Activated T-helper 2 cell treated with anti-CD3 and anti-CD28 coated beads, Interferon-gamma antibody, Interleukin-2, Interleukin-4, amounts not matched to agents 10 μg/mL and 5 μg/mL and 100 μg/mL, durations not matched to agents 14 hours and 24 hours and 36 hours (primary cell): ENCODE measurements at regions of chr6 and their contacts with region 1.

Region 1: DNA sequence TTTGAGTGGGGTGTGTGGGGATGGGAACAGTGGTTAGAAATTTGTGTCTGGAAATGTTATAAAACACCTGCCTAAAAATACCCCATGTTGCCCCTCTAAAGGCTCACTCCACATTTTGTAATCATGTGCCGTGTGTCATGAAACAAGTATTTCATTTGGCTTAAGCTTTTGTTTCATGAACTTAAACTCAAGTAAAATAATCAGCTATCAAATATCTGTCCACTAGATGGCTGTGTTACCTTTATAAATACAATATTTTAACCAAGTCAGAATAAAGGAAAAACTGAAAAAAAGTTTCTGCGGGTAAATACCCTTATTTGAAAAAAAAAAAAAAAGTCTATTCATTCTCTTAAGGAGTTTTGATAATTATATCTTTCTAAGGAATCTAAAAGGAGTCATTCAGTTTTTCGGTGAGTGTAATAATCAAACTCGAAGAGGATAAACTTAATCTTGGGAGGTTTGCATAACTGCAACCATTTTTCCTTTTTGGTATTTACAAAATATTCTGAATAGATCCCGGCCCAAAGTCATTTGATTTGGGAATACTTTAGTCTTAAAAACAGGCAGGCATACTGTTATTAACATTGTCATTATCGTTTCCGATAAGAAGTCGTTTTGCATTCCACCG is 29.9 kb upstream of the MTRF1L start:
- DNase-seq: no peak
- H3K4me3 Mint-ChIP-seq: no peak overlapping the region
- H3K27ac Mint-ChIP-seq: no peak overlapping the region
- H3K4me1 Mint-ChIP-seq: no peaks in the 10 kb centered on the region
- H3K27me3 Mint-ChIP-seq: peaks cover 23% of the 10 kb centered on the region

Region 2: DNA sequence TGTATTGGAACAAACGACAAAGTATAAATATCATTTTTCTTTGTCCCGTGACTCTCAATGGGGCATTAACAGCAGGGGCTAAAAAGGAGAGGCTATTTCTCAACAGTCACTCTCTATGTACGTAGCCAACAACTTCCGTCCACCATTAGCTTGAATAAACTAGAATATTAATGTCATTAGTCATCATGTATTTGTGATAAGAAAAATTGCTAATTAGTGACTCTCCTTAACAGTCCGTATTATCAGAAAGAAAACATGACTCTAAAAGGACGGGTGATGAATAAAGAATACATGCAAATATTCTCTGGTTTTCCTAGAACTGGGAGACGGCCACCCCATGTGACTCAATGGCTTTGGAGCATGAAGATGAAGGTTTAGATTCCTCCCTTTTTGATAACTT is 263.2 kb before region 1 on chr6:
- intact Hi-C with region 1: loop called (anchors 10 kb)
- DNase-seq: no peak
- H3K4me3 Mint-ChIP-seq: no peak overlapping the region
- H3K27ac Mint-ChIP-seq: no peak overlapping the region
- H3K4me1 Mint-ChIP-seq: no peaks in the 10 kb centered on the region
- H3K27me3 Mint-ChIP-seq: no peaks in the 10 kb centered on the region

Region 3: DNA sequence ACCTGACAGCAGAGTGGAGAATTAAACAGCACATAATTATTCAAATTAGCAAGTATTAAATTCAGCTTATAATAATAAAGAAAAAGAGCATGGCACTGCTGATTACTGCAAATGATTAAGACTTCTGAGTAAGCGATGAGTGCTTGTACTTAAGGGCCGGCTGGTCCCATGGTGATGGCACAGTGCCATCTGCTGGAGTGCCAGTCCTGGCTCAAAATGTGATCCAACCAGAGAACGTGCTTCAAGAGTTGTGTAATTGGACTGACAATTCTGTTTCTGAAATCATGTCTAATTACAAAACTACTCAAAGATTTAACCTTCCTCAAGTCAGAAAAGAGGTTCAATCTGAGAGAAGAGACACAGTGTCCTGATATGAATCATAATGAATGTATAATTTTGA is 280.3 kb after region 1 on chr6:
- intact Hi-C with region 1: loop called (anchors 1 kb)
- DNase-seq: no peak
- H3K4me3 Mint-ChIP-seq: no peak overlapping the region
- H3K27ac Mint-ChIP-seq: no peak overlapping the region
- H3K4me1 Mint-ChIP-seq: no peaks in the 10 kb centered on the region
- H3K27me3 Mint-ChIP-seq: peaks cover 2% of the 10 kb centered on the region

Region 4: GRCh38 chr6:153511896-153512496 is 479.6 kb after region 1 on chr6:
- intact Hi-C with region 1: loop called (anchors 10 kb)
- DNase-seq: no peak
- H3K4me3 Mint-ChIP-seq: no peak overlapping the region
- H3K27ac Mint-ChIP-seq: no peak overlapping the region
- H3K4me1 Mint-ChIP-seq: no peaks in the 10 kb centered on the region
- H3K27me3 Mint-ChIP-seq: no peaks in the 10 kb centered on the region